ENCODE measurements at regions of chr6 and their contacts with region 1.

Region 1: DNA sequence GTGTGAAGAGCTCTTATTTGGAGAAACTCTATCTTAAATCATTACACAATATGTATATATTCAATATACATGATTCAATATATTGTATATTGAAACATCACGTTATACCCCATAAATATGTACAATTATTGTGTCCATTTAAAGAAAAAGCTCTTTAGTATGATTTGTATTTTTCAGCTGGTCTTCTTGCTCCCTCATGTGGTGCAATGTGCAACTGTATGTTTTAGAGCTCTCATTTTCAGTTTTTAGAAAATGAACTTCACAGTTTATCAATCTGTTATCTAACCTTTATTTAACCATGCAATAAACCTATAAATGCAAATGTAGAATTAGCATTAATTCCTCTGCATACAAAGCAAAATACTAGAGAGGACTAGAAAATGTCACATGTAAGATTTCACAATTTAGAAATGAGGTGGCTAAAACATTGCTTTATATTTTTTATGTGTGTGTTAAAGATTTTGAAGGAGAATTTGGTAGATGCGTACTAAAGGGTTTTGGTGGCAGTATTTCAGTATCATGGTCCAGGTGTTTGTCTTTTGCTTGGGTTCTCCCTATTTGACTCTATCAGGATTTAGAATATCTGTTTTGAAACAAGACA is 167.1 kb downstream of the PHF3 start:
- DNase-seq: peak; percentile 56
- H3K4me3 Mint-ChIP-seq: no peak overlapping the region
- H3K27ac Mint-ChIP-seq: peak overlapping the region; percentile 99
- H3K4me1 Mint-ChIP-seq: peaks cover 35% of the 10 kb centered on the region
- H3K27me3 Mint-ChIP-seq: no peaks in the 10 kb centered on the region
- CTCF ChIP-seq: peak; percentile 80

Region 2: DNA sequence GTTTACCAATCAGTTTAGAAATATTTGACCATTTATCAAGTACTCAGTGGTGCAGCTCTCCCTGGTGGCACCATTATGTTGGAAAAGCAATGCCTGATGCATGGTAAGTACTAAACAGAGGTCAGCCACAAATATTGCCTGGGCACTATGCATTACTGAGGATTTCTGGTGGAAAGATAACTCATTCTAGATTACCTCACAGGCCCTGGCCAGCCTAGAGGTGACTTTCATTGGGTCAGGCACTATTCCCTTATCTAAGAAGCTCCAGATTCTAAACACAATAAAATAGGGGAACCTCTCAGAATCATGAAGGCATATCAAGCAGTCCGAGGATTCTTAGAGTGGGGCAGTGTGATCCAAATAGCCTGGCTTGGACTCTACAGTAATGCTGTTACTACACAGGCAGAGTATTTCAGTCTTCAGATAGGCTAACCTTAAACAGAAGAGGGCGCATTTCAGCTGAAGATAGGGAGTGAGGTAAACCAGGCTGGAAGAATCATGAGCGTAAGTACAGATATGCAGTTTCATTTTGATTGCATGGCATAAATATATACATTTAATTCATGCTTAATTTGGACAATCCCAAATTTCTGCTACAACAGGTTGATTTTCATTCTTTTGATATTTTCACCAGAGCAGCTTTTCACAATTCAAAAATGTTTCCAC is 495.0 kb before region 1 on chr6:
- CTCF ChIA-PET with region 1: interaction called, 15 read pairs
- POLR2A ChIA-PET with region 1: interaction called, 4 read pairs
- intact Hi-C with region 1: loop called (anchors 1 kb)
- DNase-seq: peak; percentile 74
- H3K4me3 Mint-ChIP-seq: no peak overlapping the region
- H3K27ac Mint-ChIP-seq: no peak overlapping the region
- H3K4me1 Mint-ChIP-seq: peaks cover 6% of the 10 kb centered on the region
- H3K27me3 Mint-ChIP-seq: no peaks in the 10 kb centered on the region
- CTCF ChIP-seq: peak; percentile 50

Region 3: DNA sequence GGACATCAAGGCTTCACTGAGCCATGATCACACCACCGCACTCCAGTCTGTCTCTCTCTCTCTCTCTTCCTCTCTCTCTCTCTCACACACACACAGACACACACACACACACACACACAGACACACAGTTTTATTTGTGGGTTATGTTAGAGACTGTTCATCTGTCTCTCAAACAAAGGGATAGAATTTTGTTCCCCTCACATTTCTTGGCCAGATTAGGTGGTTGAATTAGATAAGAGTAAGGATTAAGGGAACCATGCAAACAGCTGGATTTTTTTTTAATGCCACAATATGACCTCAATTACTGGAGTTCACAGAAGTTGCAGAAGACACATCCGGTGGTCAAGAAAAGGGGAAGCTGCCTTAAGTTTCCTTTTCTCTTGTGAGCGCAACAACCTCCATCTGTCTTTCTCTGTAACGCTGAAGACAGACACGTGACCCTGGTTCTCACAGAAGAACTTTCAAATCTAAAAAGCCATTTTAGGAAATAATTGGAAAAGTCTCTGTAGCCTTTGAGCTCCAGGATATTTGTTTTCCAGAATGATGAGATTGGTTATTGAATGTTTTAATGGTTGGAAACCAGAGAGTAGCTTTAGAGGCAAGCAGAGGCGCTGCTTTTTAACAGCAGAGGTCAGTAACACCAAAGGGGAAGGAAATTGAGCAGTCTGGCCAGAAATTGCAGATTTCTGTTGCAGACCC is 450.0 kb before region 1 on chr6:
- CTCF ChIA-PET with region 1: interaction called, 103 read pairs
- POLR2A ChIA-PET with region 1: interaction called, 15 read pairs
- intact Hi-C with region 1: loop called (anchors 1 kb)
- DNase-seq: peak; percentile 67
- H3K4me3 Mint-ChIP-seq: no peak overlapping the region
- H3K27ac Mint-ChIP-seq: no peak overlapping the region
- H3K4me1 Mint-ChIP-seq: peaks cover 8% of the 10 kb centered on the region
- H3K27me3 Mint-ChIP-seq: no peaks in the 10 kb centered on the region
- CTCF ChIP-seq: peak; percentile 72

Region 4: GRCh38 chr6:63441266-63441956 is 361.3 kb before region 1 on chr6:
- CTCF ChIA-PET with region 1: no interaction called
- POLR2A ChIA-PET with region 1: no interaction called
- intact Hi-C with region 1: no loop called
- DNase-seq: no peak
- H3K4me3 Mint-ChIP-seq: no peak overlapping the region
- H3K27ac Mint-ChIP-seq: no peak overlapping the region
- H3K4me1 Mint-ChIP-seq: no peaks in the 10 kb centered on the region
- H3K27me3 Mint-ChIP-seq: no peaks in the 10 kb centered on the region
- CTCF ChIP-seq: no peak

Region 5: DNA sequence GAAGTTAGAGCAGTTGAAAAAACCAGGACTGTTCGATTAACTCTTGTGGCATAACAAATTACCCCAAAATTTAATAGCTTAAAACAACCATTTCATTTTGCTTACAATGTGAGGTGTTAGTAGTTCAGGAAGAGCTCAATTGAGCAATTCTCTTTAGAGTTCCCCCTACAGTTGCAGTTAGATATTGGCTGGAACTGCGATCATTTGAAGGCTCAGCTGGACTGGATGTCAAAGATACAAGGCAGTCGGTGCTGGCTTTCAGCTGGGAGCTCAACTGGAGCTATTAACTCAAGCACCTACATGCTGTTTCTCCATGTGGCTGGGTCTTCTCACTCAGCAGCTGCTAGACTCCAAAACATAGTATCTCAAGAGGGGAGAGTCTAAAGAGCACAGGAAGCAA is 326.4 kb before region 1 on chr6:
- CTCF ChIA-PET with region 1: no interaction called
- POLR2A ChIA-PET with region 1: no interaction called
- intact Hi-C with region 1: no loop called
- DNase-seq: no peak
- H3K4me3 Mint-ChIP-seq: no peak overlapping the region
- H3K27ac Mint-ChIP-seq: no peak overlapping the region
- H3K4me1 Mint-ChIP-seq: peaks cover 6% of the 10 kb centered on the region
- H3K27me3 Mint-ChIP-seq: no peaks in the 10 kb centered on the region
- CTCF ChIP-seq: no peak

Region 6: GRCh38 chr6:63598049-63599036 is 204.4 kb before region 1 on chr6:
- CTCF ChIA-PET with region 1: interaction called, 38 read pairs
- POLR2A ChIA-PET with region 1: interaction called, 27 read pairs
- intact Hi-C with region 1: loop called (anchors 1 kb)
- DNase-seq: peak; percentile 84
- H3K4me3 Mint-ChIP-seq: peak overlapping the region; percentile 72
- H3K27ac Mint-ChIP-seq: peak overlapping the region; percentile 4
- H3K4me1 Mint-ChIP-seq: peaks cover 7% of the 10 kb centered on the region
- H3K27me3 Mint-ChIP-seq: no peaks in the 10 kb centered on the region
- CTCF ChIP-seq: peak; percentile 79

Region 7: GRCh38 chr6:63783096-63783495 is 19.6 kb before region 1 on chr6:
- CTCF ChIA-PET with region 1: interaction called, 19 read pairs
- POLR2A ChIA-PET with region 1: interaction called, 5 read pairs
- intact Hi-C with region 1: no loop called
- DNase-seq: no peak
- H3K4me3 Mint-ChIP-seq: no peak overlapping the region
- H3K27ac Mint-ChIP-seq: no peak overlapping the region
- H3K4me1 Mint-ChIP-seq: no peaks in the 10 kb centered on the region
- H3K27me3 Mint-ChIP-seq: no peaks in the 10 kb centered on the region
- CTCF ChIP-seq: no peak

Region 8: DNA sequence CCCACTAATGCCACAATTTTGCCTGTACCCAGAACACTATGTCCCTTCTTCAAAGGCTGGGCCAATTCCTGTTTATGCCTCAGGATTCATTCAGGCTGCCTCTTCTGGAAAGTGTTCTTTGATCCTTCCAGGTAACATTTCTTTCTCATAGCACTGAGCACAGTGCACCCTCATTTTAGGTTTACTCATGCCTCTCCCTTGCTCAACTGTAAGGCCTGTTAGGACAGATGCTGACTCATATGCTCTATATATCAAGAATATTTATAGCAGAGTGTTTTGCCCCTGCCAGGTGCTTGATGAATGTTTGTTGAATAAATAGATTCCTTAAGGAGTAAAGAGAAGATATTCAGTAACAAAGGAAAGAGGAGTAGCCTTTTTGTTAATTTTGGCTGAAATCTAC is 96.8 kb after region 1 on chr6:
- CTCF ChIA-PET with region 1: interaction called, 3 read pairs
- POLR2A ChIA-PET with region 1: interaction called, 24 read pairs
- intact Hi-C with region 1: no loop called
- DNase-seq: peak; percentile 86
- H3K4me3 Mint-ChIP-seq: peak overlapping the region; percentile 26
- H3K27ac Mint-ChIP-seq: peak overlapping the region; percentile 66
- H3K4me1 Mint-ChIP-seq: peaks cover 25% of the 10 kb centered on the region
- H3K27me3 Mint-ChIP-seq: no peaks in the 10 kb centered on the region
- CTCF ChIP-seq: no peak